ENCODE measurements at regions of chr5 and their contacts with region 1.

Region 1: DNA sequence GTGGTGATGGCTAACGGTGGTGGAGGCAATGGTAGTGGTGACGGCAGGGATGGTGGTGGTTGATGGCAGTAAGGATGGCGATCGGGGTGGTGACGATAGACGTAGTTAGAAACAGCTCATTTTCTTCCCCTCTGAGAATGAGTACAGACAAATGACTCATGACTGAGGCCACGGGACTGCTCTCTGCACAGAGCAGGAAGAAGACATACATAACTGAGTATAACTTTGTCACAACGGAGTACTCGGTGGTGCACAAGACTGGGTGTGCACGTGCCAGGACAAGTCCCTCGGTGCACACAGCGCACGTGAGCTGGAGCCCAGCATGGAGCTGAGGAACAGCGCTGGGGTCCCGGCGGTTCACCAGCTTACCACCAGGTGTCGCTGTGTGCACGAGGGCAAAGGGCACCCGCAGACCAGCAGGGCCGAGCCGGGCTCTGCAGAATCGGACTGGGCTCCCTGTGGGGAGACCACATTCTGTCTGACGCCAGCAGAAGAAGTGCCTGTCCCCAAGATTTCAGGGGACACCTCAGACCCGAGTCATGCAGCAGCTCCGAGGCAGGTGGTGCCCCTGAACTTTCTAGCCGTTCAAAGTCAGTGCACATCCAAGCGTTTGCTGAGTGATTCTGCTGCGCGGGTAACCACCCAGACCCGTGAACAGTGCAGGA is 188.6 kb downstream of the FSTL4 start:
- DNase-seq: peak; percentile 76
- H3K4me3 Mint-ChIP-seq: no peak overlapping the region
- H3K27ac Mint-ChIP-seq: no peak overlapping the region
- H3K4me1 Mint-ChIP-seq: peaks cover 10% of the 10 kb centered on the region
- H3K27me3 Mint-ChIP-seq: peaks cover 11% of the 10 kb centered on the region

Region 2: DNA sequence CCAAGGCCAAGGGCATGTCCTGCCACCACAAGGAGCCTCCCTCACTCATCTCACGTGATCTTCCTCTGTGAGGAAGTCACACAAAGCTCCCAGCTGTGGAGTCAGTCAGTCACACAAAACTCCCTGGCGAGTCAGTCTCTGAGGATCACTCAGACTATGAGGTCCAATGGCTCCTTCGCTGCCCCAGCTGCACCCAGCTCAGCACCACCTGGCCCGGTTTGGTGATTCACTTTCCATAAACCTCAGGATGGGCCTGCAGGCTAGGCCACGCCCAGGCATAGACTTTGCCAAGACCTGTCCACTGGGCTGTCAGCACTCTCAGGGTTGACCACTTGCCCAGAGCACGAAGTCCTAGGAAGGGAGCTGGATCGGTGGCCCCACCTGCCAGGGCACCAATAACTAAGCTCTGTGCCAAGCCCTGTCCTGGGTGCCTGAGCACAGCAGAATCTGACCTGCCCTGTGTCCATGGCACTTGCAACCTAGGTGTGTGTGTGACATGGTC is 138.1 kb before region 1 on chr5:
- CTCF ChIA-PET with region 1: no interaction called
- POLR2A ChIA-PET with region 1: no interaction called
- intact Hi-C with region 1: no loop called
- DNase-seq: peak; percentile 22
- H3K4me3 Mint-ChIP-seq: no peak overlapping the region
- H3K27ac Mint-ChIP-seq: no peak overlapping the region
- H3K4me1 Mint-ChIP-seq: no peaks in the 10 kb centered on the region
- H3K27me3 Mint-ChIP-seq: no peaks in the 10 kb centered on the region

Region 3: GRCh38 chr5:133398646-133399101 is 25.1 kb before region 1 on chr5:
- CTCF ChIA-PET with region 1: interaction called, 10 read pairs
- POLR2A ChIA-PET with region 1: no interaction called
- intact Hi-C with region 1: no loop called
- DNase-seq: peak; percentile 67
- H3K4me3 Mint-ChIP-seq: no peak overlapping the region
- H3K27ac Mint-ChIP-seq: no peak overlapping the region
- H3K4me1 Mint-ChIP-seq: peaks cover 27% of the 10 kb centered on the region
- H3K27me3 Mint-ChIP-seq: no peaks in the 10 kb centered on the region

Region 4: DNA sequence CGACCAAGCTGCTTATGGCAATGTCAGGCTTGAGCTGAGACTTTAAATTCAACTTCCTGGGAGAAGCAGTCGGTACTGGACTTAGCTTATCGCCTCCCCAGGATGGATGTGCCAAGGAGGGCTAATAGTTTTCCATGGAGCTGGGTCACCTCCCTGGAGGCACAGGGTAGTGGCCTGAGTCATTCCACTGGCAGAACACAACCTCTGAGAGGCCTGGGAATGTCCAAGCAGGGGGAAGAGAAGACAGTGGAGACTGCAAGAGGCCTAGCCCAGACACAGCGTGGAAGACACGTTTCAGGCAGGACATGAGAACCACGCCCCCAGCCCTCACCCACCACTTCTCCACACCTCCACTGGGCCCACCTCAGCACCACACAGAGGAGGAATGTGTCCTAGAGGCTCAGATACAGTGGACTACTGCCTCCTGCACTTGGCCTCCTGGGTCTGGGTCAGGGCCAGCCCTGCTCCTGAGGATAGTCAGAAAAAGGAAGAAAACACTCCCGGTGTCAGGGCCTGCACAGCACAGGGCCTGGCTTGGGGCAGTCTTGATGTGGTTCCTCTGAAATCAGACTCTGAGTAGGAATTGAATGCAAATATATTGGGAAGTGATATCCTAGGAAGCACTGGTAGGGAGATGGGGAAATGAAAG is 16.8 kb after region 1 on chr5:
- CTCF ChIA-PET with region 1: interaction called, 20 read pairs
- POLR2A ChIA-PET with region 1: interaction called, 3 read pairs
- intact Hi-C with region 1: no loop called
- DNase-seq: no peak
- H3K4me3 Mint-ChIP-seq: no peak overlapping the region
- H3K27ac Mint-ChIP-seq: no peak overlapping the region
- H3K4me1 Mint-ChIP-seq: no peaks in the 10 kb centered on the region
- H3K27me3 Mint-ChIP-seq: peaks cover 4% of the 10 kb centered on the region

Region 5: GRCh38 chr5:133460172-133460758 is 36.5 kb after region 1 on chr5:
- CTCF ChIA-PET with region 1: interaction called, 15 read pairs
- POLR2A ChIA-PET with region 1: no interaction called
- intact Hi-C with region 1: loop called (anchors 5 kb)
- DNase-seq: peak; percentile 63
- H3K4me3 Mint-ChIP-seq: no peak overlapping the region
- H3K27ac Mint-ChIP-seq: no peak overlapping the region
- H3K4me1 Mint-ChIP-seq: peaks cover 7% of the 10 kb centered on the region
- H3K27me3 Mint-ChIP-seq: peaks cover 2% of the 10 kb centered on the region